ENCODE measurements at regions of chr11 and their contacts with region 1.

Region 1: DNA sequence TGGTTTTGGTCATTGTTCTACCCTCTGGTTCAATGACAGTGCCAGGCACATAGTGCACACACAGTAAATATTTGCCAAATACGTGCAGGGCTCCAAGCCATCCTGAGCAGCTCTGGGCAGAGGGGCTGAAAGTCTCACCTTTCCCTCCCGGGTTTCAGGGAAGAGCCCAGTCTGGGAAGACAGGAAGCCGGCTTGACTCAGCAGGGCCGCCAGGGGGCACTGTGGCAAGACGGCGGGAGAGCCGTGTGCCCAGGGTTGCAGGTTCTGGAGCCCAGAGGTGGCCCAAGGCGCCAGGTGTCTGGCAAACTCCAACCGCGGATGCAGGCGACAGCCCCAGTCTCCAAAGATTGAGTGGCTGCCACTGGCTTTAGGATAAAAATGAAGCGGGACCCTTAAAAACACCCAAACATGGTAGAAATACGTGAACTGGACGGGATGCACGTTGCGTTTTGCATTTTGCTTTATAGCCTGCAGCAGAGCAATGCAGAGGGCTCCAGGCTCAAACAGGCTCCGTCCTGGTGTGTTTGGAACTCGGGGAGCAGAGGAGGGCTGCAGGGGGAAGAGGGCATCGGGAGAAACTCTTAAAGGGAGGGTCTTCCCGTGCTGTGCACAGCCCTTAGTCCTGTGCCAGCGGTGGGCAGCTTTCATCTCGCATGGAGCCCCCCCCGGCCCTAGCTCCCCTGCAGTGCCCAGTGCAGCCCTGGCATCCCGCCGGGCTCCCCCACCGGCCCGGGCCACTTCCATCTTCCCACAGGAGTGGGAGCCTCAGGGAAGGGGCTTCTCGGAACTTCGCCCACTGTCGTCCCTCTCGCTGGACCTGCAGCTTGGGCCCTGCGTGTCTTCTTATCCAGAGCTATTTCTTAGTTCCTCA is 10.7 kb downstream of the KRTAP5-5 start:
- DNase-seq: no peak
- H3K4me3 ChIP-seq: no peak overlapping the region
- H3K27ac ChIP-seq: no peak overlapping the region
- H3K4me1 ChIP-seq: no peaks in the 10 kb centered on the region
- H3K27me3 ChIP-seq: peaks cover 47% of the 10 kb centered on the region
- CTCF ChIP-seq: peak; percentile 81

Region 2: DNA sequence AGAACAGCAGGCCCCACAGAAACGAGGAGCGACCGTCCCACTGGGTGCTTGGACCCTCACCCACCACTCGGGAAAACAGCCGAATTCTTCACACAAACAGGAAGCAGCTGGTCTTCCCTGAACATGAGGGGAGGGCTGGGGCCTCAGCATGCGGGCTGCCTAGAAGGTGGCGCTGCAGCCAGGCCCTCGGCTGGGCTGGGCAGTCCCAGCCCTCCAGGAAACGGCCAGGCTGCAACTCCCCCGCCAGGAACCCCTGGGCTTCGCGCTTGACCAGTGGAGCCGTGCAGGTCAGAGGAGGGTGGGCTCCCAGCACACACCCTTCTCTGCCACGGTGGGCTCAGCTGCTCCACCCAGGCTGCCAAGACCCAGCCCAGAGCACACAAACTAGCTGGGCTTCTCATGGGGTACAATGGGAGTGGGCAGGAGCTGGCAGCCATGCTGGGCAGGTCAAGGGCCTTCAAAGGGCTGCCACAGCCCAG is 469.3 kb after region 1 on chr11:
- CTCF ChIA-PET with region 1: interaction called, 10 read pairs
- POLR2A ChIA-PET with region 1: no interaction called
- intact Hi-C with region 1: no loop called
- DNase-seq: no peak
- H3K4me3 ChIP-seq: no peak overlapping the region
- H3K27ac ChIP-seq: no peak overlapping the region
- H3K4me1 ChIP-seq: no peaks in the 10 kb centered on the region
- H3K27me3 ChIP-seq: no peaks in the 10 kb centered on the region
- CTCF ChIP-seq: no peak